Activated CD4-positive, alpha-beta T cell treated with anti-CD3 and anti-CD28 coated beads for 36 hours (primary cell): ENCODE measurements at regions of chr6 and their contacts with region 1.

Region 1: GRCh38 chr6:149513915-149514314 is 29.1 kb upstream of the ZC3H12D start:
- DNase-seq: no peak
- ATAC-seq: no peak
- H3K4me3 Mint-ChIP-seq: no peak overlapping the region
- H3K27ac Mint-ChIP-seq: no peak overlapping the region
- H3K4me1 Mint-ChIP-seq: peaks cover 55% of the 10 kb centered on the region
- H3K27me3 Mint-ChIP-seq: no peaks in the 10 kb centered on the region

Region 2: DNA sequence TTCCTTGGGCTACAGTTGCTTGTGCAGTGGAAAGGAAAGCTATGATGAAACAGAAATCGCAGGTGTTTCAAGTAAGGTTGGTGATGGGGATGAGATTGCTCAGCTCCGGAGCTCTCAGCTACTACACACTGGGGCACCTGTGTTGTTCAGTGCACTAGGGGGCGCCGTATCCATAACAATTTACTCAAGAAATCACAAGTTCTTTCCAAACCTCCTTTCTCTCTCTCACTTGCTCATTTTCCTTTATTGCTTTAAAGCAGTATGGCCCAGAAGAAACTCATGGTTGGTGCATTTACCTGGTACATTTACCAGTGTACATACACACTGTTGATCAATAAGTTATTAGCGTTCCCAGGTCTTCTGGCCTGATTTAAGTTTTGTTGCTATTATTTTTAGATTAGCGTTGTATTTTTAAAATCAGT is 431.6 kb before region 1 on chr6:
- CTCF ChIA-PET with region 1: interaction called, 6 read pairs
- POLR2A ChIA-PET with region 1: interaction called, 3 read pairs
- intact Hi-C with region 1: loop called (anchors 1 kb)
- DNase-seq: peak; percentile 94
- ATAC-seq: peak; percentile 79
- H3K4me3 Mint-ChIP-seq: no peak overlapping the region
- H3K27ac Mint-ChIP-seq: peak overlapping the region; percentile 52
- H3K4me1 Mint-ChIP-seq: peaks cover 51% of the 10 kb centered on the region
- H3K27me3 Mint-ChIP-seq: no peaks in the 10 kb centered on the region

Region 3: DNA sequence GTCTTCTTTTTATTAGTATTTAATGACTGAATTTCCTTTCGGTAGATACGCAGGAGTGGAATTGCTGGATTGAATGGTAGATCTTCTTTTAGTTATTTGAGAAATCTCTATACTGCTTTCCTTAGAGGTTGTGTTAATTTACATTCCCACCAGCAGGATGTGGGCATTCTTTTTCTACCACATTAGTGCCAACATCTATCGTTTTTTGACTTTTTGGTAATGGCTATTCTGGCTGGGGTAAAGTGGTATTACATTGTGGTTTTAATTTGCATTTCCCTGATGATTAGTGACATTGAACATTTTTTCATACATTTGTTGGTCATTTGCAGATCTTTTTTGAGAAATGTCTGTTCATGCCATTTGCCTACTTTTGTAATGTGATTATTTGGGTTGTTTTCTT is 76.7 kb before region 1 on chr6:
- CTCF ChIA-PET with region 1: interaction called, 29 read pairs
- POLR2A ChIA-PET with region 1: no interaction called
- intact Hi-C with region 1: loop called (anchors 1 kb)
- DNase-seq: no peak
- ATAC-seq: no peak
- H3K4me3 Mint-ChIP-seq: no peak overlapping the region
- H3K27ac Mint-ChIP-seq: no peak overlapping the region
- H3K4me1 Mint-ChIP-seq: peaks cover 15% of the 10 kb centered on the region
- H3K27me3 Mint-ChIP-seq: no peaks in the 10 kb centered on the region

Region 4: DNA sequence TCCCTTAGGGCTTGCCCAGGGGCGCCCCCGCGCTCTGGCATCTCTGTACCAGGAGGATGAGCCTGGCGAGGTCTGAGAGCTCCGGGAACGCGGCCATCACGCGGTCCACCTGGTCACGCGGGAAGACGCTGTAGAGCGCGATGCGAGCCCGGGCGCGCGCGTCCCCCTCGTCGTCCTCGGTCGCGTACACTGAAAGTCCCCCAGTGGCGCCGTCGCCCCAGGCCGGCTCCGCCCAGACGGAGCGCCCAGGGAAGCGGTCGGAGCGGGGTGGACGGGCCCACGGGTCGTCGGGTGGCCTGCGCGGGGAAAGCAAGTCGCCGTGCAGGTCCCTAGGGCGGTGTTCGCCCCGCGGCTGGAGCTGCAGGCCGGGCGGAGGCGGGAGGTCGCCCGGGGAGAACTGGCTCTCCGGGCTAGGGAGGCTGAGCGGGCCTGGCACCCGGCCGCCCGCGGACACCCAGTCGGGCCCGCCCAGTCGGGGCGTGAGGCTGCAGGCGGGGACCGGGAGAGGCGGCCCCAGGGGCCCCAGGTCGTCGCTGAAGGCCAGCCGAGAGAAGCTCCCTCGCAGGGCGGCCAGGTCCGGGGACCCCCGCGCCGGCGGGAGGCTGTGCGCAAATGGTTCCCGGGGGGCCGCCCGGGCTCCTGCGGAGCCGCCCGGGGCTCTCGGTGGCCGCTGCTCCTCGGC is 63.1 kb before region 1 on chr6:
- CTCF ChIA-PET with region 1: interaction called, 26 read pairs
- POLR2A ChIA-PET with region 1: no interaction called
- intact Hi-C with region 1: no loop called
- DNase-seq: no peak
- ATAC-seq: no peak
- H3K4me3 Mint-ChIP-seq: no peak overlapping the region
- H3K27ac Mint-ChIP-seq: no peak overlapping the region
- H3K4me1 Mint-ChIP-seq: peaks cover 4% of the 10 kb centered on the region
- H3K27me3 Mint-ChIP-seq: no peaks in the 10 kb centered on the region

Region 5: GRCh38 chr6:149473080-149474052 is 40.5 kb before region 1 on chr6:
- CTCF ChIA-PET with region 1: interaction called, 19 read pairs
- POLR2A ChIA-PET with region 1: no interaction called
- intact Hi-C with region 1: loop called in 1 of 2 experiments (anchors 10 kb)
- DNase-seq: no peak
- ATAC-seq: no peak
- H3K4me3 Mint-ChIP-seq: peak overlapping the region; percentile 34
- H3K27ac Mint-ChIP-seq: no peak overlapping the region
- H3K4me1 Mint-ChIP-seq: peaks cover 56% of the 10 kb centered on the region
- H3K27me3 Mint-ChIP-seq: no peaks in the 10 kb centered on the region

Region 6: GRCh38 chr6:149499066-149499465 is 14.8 kb before region 1 on chr6:
- CTCF ChIA-PET with region 1: interaction called, 32 read pairs
- POLR2A ChIA-PET with region 1: interaction called, 14 read pairs
- intact Hi-C with region 1: no loop called
- DNase-seq: no peak
- ATAC-seq: no peak
- H3K4me3 Mint-ChIP-seq: no peak overlapping the region
- H3K27ac Mint-ChIP-seq: peak overlapping the region; percentile 76
- H3K4me1 Mint-ChIP-seq: peaks cover 85% of the 10 kb centered on the region
- H3K27me3 Mint-ChIP-seq: no peaks in the 10 kb centered on the region

Region 7: GRCh38 chr6:149733089-149733720 is 219.3 kb after region 1 on chr6:
- CTCF ChIA-PET with region 1: no interaction called
- POLR2A ChIA-PET with region 1: no interaction called
- intact Hi-C with region 1: no loop called
- DNase-seq: no peak
- ATAC-seq: no peak
- H3K4me3 Mint-ChIP-seq: no peak overlapping the region
- H3K27ac Mint-ChIP-seq: no peak overlapping the region
- H3K4me1 Mint-ChIP-seq: peaks cover 13% of the 10 kb centered on the region
- H3K27me3 Mint-ChIP-seq: no peaks in the 10 kb centered on the region